ENCODE measurements at regions of chr9 and their contacts with region 1.

Region 1: GRCh38 chr9:76704593-76705204 is 59.5 kb upstream of the PCA3 start:
- DNase-seq: peak; percentile 78
- H3K4me3 Mint-ChIP-seq: no peak overlapping the region
- H3K27ac Mint-ChIP-seq: no peak overlapping the region
- H3K4me1 Mint-ChIP-seq: peaks cover 14% of the 10 kb centered on the region
- H3K27me3 Mint-ChIP-seq: peaks cover 36% of the 10 kb centered on the region
- CTCF ChIP-seq: peak; percentile 69

Region 2: GRCh38 chr9:76403352-76403751 is 301.3 kb before region 1 on chr9:
- CTCF ChIA-PET with region 1: interaction called, 26 read pairs
- POLR2A ChIA-PET with region 1: no interaction called
- intact Hi-C with region 1: loop called (anchors 1 kb)
- DNase-seq: peak; percentile 74
- H3K4me3 Mint-ChIP-seq: peak overlapping the region; percentile 55
- H3K27ac Mint-ChIP-seq: peak overlapping the region; percentile 90
- H3K4me1 Mint-ChIP-seq: no peaks in the 10 kb centered on the region
- H3K27me3 Mint-ChIP-seq: no peaks in the 10 kb centered on the region
- CTCF ChIP-seq: peak; percentile 33

Region 3: DNA sequence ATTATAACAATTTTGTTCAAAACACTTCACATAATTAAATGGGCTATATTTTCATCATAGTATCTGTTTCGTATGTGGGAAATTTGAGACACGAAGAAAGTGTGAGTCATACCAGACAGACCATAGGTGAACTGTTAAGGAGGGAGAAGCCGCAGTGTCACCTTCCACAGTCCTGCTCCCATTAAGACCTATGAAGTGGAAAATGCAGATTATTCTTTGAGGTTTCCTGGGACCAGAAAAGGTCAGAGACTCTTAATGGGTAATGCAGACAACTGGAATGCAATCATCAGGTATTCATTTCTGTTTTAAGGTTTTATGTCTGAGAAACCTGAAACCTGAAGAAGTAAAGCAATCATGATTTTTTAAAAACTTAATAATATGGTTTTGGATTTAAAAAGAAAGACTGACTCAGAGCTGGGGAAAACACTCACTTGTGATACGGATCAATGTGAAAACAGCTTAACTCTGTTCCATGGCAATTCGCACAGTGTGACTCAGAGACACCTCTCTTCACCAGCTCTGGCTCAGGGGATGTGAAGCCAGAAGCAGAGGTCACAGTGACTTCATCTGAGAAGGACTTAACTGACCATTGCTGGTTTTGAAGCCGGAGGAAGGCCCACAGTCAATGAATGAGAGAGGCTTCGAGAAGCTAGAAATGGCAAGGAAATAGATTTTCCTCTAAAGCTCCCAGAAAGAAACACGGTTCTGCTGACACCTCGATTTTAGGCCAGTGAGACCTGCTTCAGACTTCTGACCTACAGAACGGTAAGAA is 263.0 kb before region 1 on chr9:
- CTCF ChIA-PET with region 1: interaction called, 62 read pairs
- POLR2A ChIA-PET with region 1: no interaction called
- intact Hi-C with region 1: no loop called
- DNase-seq: peak; percentile 24
- H3K4me3 Mint-ChIP-seq: no peak overlapping the region
- H3K27ac Mint-ChIP-seq: no peak overlapping the region
- H3K4me1 Mint-ChIP-seq: no peaks in the 10 kb centered on the region
- H3K27me3 Mint-ChIP-seq: no peaks in the 10 kb centered on the region
- CTCF ChIP-seq: no peak

Region 4: GRCh38 chr9:76451234-76451633 is 253.5 kb before region 1 on chr9:
- CTCF ChIA-PET with region 1: interaction called, 62 read pairs
- POLR2A ChIA-PET with region 1: interaction called, 3 read pairs
- intact Hi-C with region 1: loop called (anchors 1 kb)
- DNase-seq: peak; percentile 40
- H3K4me3 Mint-ChIP-seq: no peak overlapping the region
- H3K27ac Mint-ChIP-seq: no peak overlapping the region
- H3K4me1 Mint-ChIP-seq: peaks cover 21% of the 10 kb centered on the region
- H3K27me3 Mint-ChIP-seq: no peaks in the 10 kb centered on the region
- CTCF ChIP-seq: no peak

Region 5: DNA sequence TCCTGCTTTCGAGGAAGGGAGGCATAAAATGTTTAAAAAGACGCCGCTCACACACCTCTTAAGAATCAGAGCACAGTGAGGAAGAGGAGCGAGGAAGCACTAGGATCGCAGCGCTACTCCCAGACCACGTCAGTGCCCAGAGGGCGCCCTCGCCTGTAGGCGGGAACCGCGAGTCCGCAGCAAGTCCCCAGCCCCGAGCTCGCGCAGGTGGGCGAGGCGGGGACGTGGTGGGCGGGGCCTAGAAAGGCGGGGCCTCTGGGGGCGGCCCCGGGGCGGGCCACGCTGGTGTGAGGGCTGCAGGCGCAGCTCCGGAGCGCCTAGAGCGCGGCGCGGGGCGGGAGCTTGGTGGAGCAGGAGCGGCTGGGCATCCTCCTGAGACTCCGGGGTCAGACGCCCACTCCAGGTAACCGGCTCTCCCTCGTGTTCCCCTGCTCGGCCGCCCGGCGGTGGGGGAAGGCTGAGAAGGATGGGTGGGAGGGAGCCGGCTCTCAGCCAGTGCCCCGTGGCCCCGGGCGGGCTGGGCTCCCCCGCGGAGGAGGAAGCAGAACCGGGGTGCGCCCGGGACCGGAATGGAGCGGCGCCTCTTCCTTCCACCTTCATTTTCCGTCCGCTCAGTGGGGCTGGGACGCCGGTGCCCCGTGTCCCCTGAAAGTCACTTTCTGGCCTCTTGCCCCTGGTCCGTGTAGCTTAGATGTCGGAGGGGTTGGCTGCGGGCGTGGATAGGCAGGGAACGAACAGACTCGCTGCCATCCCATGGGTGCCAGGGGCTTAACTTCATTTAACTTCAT is 245.6 kb before region 1 on chr9 and contains the start of gene GCNT1:
- CTCF ChIA-PET with region 1: interaction called, 13 read pairs
- POLR2A ChIA-PET with region 1: no interaction called
- intact Hi-C with region 1: no loop called
- DNase-seq: peak; percentile 90
- H3K4me3 Mint-ChIP-seq: peak within 1 kb of the TSS; percentile 84
- H3K27ac Mint-ChIP-seq: peak within 1 kb of the TSS; percentile 6
- H3K4me1 Mint-ChIP-seq: peaks cover 14% of the 10 kb centered on the region
- H3K27me3 Mint-ChIP-seq: no peaks in the 10 kb centered on the region
- CTCF ChIP-seq: peak; percentile 15
- total RNA-seq, gene GCNT1: 11.5 and 12.4 TPM in 2 replicates

Region 6: GRCh38 chr9:76490249-76490990 is 214.3 kb before region 1 on chr9:
- CTCF ChIA-PET with region 1: no interaction called
- POLR2A ChIA-PET with region 1: no interaction called
- intact Hi-C with region 1: no loop called
- DNase-seq: no peak
- H3K4me3 Mint-ChIP-seq: no peak overlapping the region
- H3K27ac Mint-ChIP-seq: no peak overlapping the region
- H3K4me1 Mint-ChIP-seq: no peaks in the 10 kb centered on the region
- H3K27me3 Mint-ChIP-seq: no peaks in the 10 kb centered on the region
- CTCF ChIP-seq: no peak

Region 7: DNA sequence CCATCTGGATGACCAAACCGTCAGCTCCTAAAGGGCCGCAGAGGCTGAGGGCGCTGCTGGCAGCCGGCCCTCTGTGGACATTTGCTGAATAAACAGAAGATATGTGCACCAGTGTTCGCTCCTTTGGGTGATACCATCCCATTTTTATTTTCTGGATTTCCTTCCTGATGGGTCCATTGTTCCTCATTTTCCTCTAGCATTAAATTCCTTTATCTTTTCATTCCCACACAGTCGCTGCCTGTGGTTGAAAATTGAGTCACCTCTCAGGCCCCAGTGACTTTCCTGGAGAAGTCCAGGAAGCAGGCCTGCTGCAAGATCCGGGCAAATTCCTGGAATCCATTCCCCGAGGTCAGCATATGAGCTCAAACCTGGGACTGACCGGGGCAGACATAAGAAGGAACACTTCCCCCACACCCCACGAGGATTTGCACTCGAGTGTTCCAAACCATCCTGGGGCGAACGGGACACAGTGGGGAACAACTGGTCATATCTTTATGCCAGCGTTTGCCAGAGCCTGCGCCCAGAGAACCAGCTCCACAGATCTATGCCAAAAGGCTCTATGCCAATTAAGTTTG is 27.1 kb before region 1 on chr9:
- CTCF ChIA-PET with region 1: interaction called, 12 read pairs
- POLR2A ChIA-PET with region 1: no interaction called
- intact Hi-C with region 1: no loop called
- DNase-seq: no peak
- H3K4me3 Mint-ChIP-seq: no peak overlapping the region
- H3K27ac Mint-ChIP-seq: no peak overlapping the region
- H3K4me1 Mint-ChIP-seq: no peaks in the 10 kb centered on the region
- H3K27me3 Mint-ChIP-seq: no peaks in the 10 kb centered on the region
- CTCF ChIP-seq: no peak

Region 8: DNA sequence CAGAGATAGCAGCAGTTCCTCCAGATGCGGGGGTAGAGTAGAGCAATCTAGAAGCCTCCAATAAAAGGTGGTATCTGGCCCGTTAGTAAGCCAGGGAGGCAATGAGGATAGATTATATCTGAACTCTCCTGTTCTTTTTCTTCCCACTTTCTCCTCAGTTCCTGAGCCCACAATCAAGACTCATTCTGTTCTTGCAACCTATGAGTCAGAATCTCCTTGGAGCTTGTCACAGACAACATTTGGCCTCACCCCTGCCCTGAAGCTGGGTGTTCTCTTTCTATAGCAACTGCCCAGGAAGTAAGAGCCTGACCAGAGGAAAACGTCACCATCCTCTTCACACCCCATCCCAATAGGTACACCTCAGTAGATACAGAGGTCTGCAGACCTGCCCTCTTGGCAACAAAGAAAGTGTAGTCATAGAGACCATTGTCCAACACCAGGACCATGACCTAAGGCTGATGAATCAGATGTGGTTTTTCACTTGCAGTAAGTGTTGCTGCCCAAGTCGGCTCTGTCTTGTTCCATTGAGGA is 16.8 kb before region 1 on chr9:
- CTCF ChIA-PET with region 1: interaction called, 144 read pairs
- POLR2A ChIA-PET with region 1: interaction called, 3 read pairs
- intact Hi-C with region 1: no loop called
- DNase-seq: peak; percentile 95
- H3K4me3 Mint-ChIP-seq: peak overlapping the region; percentile 35
- H3K27ac Mint-ChIP-seq: peak overlapping the region; percentile 96
- H3K4me1 Mint-ChIP-seq: peaks cover 26% of the 10 kb centered on the region
- H3K27me3 Mint-ChIP-seq: no peaks in the 10 kb centered on the region
- CTCF ChIP-seq: no peak

Measured in MCF 10A (cell line).